Activated CD4-positive, alpha-beta T cell treated with anti-CD3 and anti-CD28 coated beads, Interleukin-2, amount 10 ng/mL, durations not matched to agents 24 days and 14 days (primary cell): ENCODE measurements at regions of chr17 and their contacts with region 1.

Region 1: GRCh38 chr17:17568749-17569195 is 22.7 kb downstream of the PEMT start:
- DNase-seq: peak; percentile 88
- H3K4me3 Mint-ChIP-seq: no peak overlapping the region
- H3K27ac Mint-ChIP-seq: no peak overlapping the region
- H3K4me1 Mint-ChIP-seq: no peaks in the 10 kb centered on the region
- H3K27me3 Mint-ChIP-seq: no peaks in the 10 kb centered on the region

Region 2: GRCh38 chr17:17551361-17551760 is 17.4 kb before region 1 on chr17:
- intact Hi-C with region 1: no loop called
- DNase-seq: no peak
- H3K4me3 Mint-ChIP-seq: no peak overlapping the region
- H3K27ac Mint-ChIP-seq: no peak overlapping the region
- H3K4me1 Mint-ChIP-seq: no peaks in the 10 kb centered on the region
- H3K27me3 Mint-ChIP-seq: no peaks in the 10 kb centered on the region

Region 3: DNA sequence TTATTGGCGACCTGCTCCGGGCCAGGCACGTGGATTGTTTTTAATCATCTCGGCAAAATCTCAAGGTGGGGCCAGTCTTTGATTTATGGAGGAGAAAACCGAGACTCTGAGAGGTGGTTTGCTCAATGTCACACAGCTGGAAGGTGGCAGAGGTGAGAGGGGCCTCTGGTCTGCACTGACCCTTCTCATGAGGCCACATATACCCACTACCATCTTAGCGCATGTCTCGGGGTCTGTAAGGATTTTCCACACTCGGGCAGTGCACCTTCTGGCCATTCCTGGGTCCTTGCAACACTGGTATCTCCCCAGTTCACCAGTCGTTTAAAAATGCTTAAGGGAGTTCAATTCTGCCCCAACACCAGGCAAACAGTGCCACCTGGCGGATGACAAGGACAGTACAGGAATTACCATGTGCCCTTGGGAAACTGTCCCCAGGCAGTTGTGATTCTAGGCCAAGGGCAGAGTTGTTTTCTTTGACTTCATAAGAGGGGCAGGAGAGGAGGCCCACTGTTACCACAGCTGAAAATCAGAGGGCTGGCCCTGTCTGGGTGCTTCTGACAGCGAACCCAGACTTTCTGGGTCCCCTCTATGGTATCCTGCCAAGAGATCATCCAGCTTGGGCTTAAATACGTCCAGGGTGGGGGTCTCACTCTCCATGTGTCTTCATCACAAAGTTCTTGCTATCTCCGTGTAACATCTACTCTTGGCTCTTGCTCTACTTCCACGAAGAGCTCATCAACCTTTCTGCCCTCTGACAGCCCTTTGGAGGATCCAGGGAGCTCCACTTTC is 73.0 kb after region 1 on chr17:
- intact Hi-C with region 1: loop called (anchors 5 kb)
- DNase-seq: peak; percentile 93
- H3K4me3 Mint-ChIP-seq: no peak overlapping the region
- H3K27ac Mint-ChIP-seq: no peak overlapping the region
- H3K4me1 Mint-ChIP-seq: peaks cover 1% of the 10 kb centered on the region
- H3K27me3 Mint-ChIP-seq: no peaks in the 10 kb centered on the region